Thyroid gland (tissue), 4 donors: ENCODE measurements at regions of chr6 and their contacts with region 1.

Region 1: GRCh38 chr6:119349323-119350042 is at the start of gene MAN1A1:
- DNase-seq: peak; percentile 89 to 90
- H3K4me3 ChIP-seq: peak within 1 kb of the TSS; percentile 63 to 95 (median 95)
- H3K27ac ChIP-seq: peak within 1 kb of the TSS; percentile 69 to 96 (median 93)
- H3K4me1 ChIP-seq: peaks cover 15 to 30% of the 10 kb centered on the region in 2 donors
- H3K27me3 ChIP-seq: no peaks in the 10 kb centered on the region
- CTCF ChIP-seq: peak in 1 of 6 experiments; percentile 3
- POLR2A ChIP-seq: peak; percentile 83 to 99
- total RNA-seq, gene MAN1A1: 71.7 to 170 (median 128) TPM

Region 2: GRCh38 chr6:118968416-118968815 is 381.1 kb before region 1 on chr6:
- intact Hi-C with region 1: no loop called
- DNase-seq: no peak
- H3K4me3 ChIP-seq: no peak overlapping the region
- H3K27ac ChIP-seq: no peak overlapping the region
- H3K4me1 ChIP-seq: no peaks in the 10 kb centered on the region
- H3K27me3 ChIP-seq: no peaks in the 10 kb centered on the region
- CTCF ChIP-seq: peak in 3 of 6 experiments; percentile 50 to 58 (median 57)
- POLR2A ChIP-seq: no peak

Region 3: DNA sequence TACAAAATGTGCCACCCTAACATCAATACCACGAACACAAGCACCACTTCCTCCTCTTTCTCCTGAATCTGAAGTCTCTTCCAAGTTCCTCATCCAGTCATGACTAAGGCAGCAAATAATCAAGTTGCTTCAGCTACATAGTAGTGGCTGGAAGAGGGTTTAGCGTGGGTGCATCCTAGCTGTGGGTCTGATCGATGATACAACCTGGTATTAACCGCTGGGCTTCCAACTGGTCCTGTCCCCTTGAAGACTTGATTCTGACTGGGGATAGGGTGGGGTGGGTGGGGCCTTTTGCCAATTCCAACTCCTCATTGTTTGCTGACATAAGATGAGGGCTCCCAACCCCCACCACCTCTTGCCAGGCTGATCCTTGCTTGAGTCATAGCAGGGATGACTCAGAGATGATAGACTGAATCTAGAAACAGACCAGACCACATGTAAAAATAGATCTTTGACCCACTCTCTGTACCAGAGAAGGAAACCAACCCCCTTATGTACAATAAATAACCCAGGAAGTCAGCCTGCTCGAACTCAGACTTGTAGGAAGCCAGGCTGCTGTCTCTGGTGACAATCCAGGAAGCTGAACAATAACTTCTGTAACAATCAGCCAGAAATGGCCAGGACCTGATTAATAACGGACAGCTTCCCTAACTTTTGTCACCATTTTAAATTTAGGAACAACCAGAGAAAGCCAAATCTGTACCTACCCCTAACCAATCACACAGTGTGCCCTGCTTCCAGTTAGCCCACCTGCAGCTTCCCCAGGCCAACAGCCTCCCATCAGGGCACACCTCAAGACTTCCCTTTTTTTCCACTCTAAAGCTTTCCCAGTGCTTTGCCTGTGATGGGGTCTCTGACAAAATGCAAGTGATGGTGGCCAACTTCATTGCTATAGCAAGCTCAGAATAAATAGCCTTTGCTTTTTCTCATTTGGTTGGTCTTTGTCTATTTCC is 202.1 kb before region 1 on chr6:
- intact Hi-C with region 1: loop called (anchors 5 kb)
- DNase-seq: no peak
- H3K4me3 ChIP-seq: no peak overlapping the region
- H3K27ac ChIP-seq: peak overlapping the region in 1 of 3 donors; percentile 6
- H3K4me1 ChIP-seq: peaks cover 0 to 4% of the 10 kb centered on the region in 2 donors
- H3K27me3 ChIP-seq: no peaks in the 10 kb centered on the region
- CTCF ChIP-seq: no peak
- POLR2A ChIP-seq: no peak